ENCODE measurements at regions of chr3 and their contacts with region 1.

Region 1: DNA sequence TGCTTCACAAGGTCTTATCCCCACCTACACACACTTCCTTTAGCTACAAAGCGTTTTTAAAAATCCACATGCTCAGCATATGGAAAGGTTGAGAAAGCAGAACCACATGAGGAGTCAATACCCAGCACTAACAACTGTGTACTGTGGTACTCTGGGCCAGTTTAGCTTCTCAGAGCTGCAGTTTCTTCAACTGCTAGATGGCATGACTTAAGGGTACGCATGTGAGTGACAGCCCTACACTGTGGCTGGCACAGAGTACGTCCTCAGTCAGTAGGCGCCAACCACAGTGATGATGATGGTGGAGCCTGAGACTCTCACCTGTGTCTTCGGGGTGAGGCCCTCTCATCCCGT is 17.4 kb downstream of the CCDC12 start:
- DNase-seq: no peak
- H3K4me3 Mint-ChIP-seq: peak overlapping the region; percentile 32
- H3K27ac Mint-ChIP-seq: peak overlapping the region; percentile 83
- H3K4me1 Mint-ChIP-seq: peaks cover 71% of the 10 kb centered on the region
- H3K27me3 Mint-ChIP-seq: no peaks in the 10 kb centered on the region

Region 2: GRCh38 chr3:46915297-46915822 is 43.8 kb before region 1 on chr3:
- intact Hi-C with region 1: loop called (anchors 5 kb)
- DNase-seq: no peak
- H3K4me3 Mint-ChIP-seq: no peak overlapping the region
- H3K27ac Mint-ChIP-seq: peak overlapping the region; percentile 30
- H3K4me1 Mint-ChIP-seq: peaks cover 18% of the 10 kb centered on the region
- H3K27me3 Mint-ChIP-seq: no peaks in the 10 kb centered on the region

Region 3: GRCh38 chr3:46947981-46948791 is 10.9 kb before region 1 on chr3:
- intact Hi-C with region 1: loop called (anchors 1 kb)
- DNase-seq: peak; percentile 87
- H3K4me3 Mint-ChIP-seq: peak overlapping the region; percentile 80
- H3K27ac Mint-ChIP-seq: peak overlapping the region; percentile 94
- H3K4me1 Mint-ChIP-seq: peaks cover 71% of the 10 kb centered on the region
- H3K27me3 Mint-ChIP-seq: no peaks in the 10 kb centered on the region

Region 4: DNA sequence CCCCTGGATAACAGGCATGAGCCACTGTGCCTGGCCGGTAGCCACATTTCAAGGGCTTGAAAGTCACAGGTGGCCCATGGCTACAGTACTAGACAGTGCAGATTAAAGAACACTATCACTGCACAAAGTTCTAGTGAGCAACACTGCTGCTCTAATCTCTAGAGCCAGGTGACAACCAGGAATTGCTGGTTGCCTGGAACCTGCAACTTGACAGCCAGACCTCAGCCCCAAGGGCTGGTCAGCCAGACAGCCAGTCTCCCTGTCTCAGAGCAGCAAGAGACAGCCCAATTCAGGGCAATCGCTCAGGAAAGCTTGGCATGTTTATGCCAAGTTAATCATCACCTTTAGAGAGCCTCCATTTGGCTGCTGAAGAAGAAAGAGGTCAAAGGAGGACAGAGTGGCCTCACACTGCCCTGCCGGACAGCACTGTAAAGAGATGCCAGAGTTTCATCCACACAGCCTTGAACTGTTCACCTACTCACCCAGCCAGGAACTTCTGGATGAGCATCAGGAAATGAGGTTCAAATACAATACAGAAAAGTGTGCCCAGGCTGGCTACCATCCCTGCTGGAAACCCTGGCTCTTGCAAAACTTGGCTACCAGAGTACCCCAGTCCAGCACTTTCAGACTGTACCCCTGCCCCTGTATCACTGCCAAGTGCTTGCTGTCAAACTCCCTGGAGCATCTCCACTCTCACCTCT is 11.4 kb after region 1 on chr3:
- intact Hi-C with region 1: loop called (anchors 1 kb)
- DNase-seq: no peak
- H3K4me3 Mint-ChIP-seq: no peak overlapping the region
- H3K27ac Mint-ChIP-seq: peak overlapping the region; percentile 77
- H3K4me1 Mint-ChIP-seq: peaks cover 77% of the 10 kb centered on the region
- H3K27me3 Mint-ChIP-seq: no peaks in the 10 kb centered on the region

Measured in activated CD4-positive, alpha-beta T cell treated with anti-CD3 and anti-CD28 coated beads, Interleukin-2, amount 10 ng/mL, durations not matched to agents 24 days and 14 days (primary cell).